Left ventricle myocardium superior (tissue), 1 donor: ENCODE measurements at regions of chr7 and their contacts with region 1.

Region 1: DNA sequence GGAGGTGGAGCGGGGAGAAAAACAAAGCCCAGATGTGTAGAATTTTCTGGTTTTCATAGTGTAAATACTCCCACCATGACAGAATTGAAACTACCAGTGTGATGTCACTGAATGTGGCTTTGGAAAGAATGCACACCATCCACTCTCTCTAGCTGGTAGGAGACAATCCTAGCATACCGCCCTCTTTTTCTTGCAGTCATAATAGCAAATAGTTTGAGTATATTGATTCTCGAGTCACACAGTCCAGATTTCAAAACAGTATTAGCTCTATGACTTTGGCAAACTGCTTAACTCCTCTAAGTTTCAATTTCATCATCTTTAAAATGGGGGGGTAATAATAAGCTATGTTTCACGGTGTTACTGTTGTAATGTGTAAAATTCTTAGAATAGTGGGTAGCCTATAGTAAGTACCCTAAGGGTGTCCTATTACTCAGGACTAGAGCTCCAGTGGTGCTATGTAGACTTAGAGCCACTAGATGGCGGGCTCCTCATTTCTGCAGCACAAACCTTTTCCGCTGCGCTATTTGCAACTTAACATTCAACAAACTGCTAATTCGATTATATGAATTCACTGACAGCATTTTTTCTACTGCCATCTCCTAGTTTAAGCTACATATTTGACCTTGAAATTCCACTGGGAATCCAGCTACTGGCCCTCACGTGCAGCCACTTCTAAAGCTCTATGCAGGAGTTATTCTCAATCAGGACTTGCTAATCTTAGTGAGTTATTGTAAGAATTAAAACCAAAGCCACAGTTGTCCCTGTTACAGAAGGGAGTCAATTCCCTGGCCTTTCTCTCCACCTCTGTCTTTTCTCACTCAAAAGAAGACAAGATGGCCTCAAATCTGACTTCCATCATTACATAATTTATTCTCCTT is 18.7 kb downstream of the TAS2R40 start:
- DNase-seq: peak; percentile 48
- ATAC-seq: peak; percentile 93

Region 2: GRCh38 chr7:143008007-143008901 is 232.3 kb before region 1 on chr7:
- intact Hi-C with region 1: no loop called
- DNase-seq: peak; percentile 87
- ATAC-seq: peak; percentile 88

Region 3: GRCh38 chr7:143305423-143306070 is 65.0 kb after region 1 on chr7:
- intact Hi-C with region 1: loop called (anchors 5 kb)
- DNase-seq: peak; percentile 88
- ATAC-seq: peak; percentile 91

Region 4: DNA sequence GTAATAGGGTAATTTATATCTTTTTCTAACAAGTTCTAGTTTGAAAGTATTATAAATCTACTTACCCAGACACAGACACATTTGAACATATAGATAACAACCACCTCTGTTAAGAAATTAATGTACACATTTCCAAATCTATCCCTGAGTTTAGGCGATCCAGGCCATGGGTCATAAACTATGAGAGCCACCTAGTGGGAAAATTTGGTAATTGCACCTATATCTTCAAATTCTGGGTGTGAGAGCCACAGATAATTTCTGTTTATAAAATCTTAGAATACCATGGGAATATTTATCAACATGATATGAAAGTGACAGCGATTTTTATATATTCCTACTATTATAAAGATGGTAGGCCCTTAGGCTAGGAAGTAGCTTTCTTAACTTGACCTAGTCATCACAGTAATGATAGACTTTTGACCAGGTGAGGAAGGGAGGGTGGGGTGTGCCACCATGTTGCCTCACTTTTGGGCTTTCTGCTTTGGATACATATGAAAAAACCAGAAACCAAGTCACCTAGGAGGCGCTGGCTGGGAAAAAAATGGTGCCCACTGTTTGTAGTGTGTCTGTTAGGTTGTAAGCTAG is 176.1 kb after region 1 on chr7:
- intact Hi-C with region 1: loop called (anchors 10 kb)
- DNase-seq: no peak
- ATAC-seq: peak; percentile 42

Region 5: GRCh38 chr7:143452495-143452894 is 212.0 kb after region 1 on chr7:
- intact Hi-C with region 1: no loop called
- DNase-seq: no peak
- ATAC-seq: no peak